A673 (cell line): ENCODE measurements at regions of chr14 and their contacts with region 1.

Region 1: GRCh38 chr14:23327947-23328744 is 6.9 kb downstream of the PABPN1 start:
- DNase-seq: peak; percentile 82
- H3K4me3 ChIP-seq: no peak overlapping the region
- H3K27ac ChIP-seq: no peak overlapping the region
- H3K4me1 ChIP-seq: peaks cover 4% of the 10 kb centered on the region
- H3K27me3 ChIP-seq: no peaks in the 10 kb centered on the region
- CTCF ChIP-seq: peak; percentile 90

Region 2: DNA sequence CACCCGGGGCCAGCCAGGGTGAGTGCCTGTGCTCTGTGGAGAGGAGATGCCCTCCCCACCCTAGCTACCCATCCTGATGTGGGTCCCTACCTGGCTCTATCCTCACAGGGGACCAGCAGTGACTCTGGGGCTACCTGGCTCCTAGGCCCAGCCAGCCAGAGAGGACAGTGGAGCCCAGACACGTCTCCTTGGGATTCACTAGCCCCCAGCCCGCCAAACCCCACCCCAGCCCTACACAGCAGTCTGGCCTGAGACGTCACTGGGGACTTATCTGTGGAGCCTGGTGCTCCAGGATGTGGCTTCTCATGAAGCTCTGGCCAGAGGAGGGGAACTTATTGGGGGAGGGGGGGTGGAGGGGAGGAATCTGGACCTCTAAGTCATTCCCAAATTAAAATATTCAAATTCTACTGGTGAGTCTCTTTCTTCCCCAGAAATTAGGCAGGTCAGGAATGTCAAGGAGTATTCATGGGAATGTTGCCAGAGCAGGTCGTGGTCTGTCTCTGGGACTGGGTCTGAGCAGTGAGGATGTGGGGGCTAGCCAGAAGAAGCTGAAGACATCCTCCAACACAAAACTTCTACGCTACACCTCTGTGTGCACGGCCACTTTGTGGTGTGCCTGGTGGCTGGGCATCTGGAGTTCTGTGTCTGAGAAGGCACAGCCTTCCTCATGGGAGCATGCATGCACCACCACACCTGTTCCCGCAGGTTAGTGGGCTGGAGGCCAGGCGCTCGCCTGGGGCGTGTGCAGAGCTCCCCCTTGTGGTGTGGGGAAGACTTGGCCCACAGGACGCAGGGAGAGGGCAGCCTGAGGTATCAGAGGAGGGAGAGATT is 51.4 kb after region 1 on chr14:
- CTCF ChIA-PET with region 1: no interaction called
- POLR2A ChIA-PET with region 1: no interaction called
- intact Hi-C with region 1: loop called (anchors 1 kb)
- DNase-seq: peak; percentile 50
- H3K4me3 ChIP-seq: no peak overlapping the region
- H3K27ac ChIP-seq: no peak overlapping the region
- H3K4me1 ChIP-seq: peaks cover 8% of the 10 kb centered on the region
- H3K27me3 ChIP-seq: no peaks in the 10 kb centered on the region
- CTCF ChIP-seq: peak; percentile 97

Region 3: GRCh38 chr14:23457587-23458445 is 129.7 kb after region 1 on chr14:
- CTCF ChIA-PET with region 1: no interaction called
- POLR2A ChIA-PET with region 1: no interaction called
- intact Hi-C with region 1: loop called (anchors 5 kb)
- DNase-seq: no peak
- H3K4me3 ChIP-seq: no peak overlapping the region
- H3K27ac ChIP-seq: no peak overlapping the region
- H3K4me1 ChIP-seq: no peaks in the 10 kb centered on the region
- H3K27me3 ChIP-seq: no peaks in the 10 kb centered on the region
- CTCF ChIP-seq: no peak

Region 4: GRCh38 chr14:23562268-23563203 is 234.4 kb after region 1 on chr14:
- CTCF ChIA-PET with region 1: no interaction called
- POLR2A ChIA-PET with region 1: no interaction called
- intact Hi-C with region 1: loop called (anchors 2 kb)
- DNase-seq: peak; percentile 75
- H3K4me3 ChIP-seq: no peak overlapping the region
- H3K27ac ChIP-seq: no peak overlapping the region
- H3K4me1 ChIP-seq: peaks cover 3% of the 10 kb centered on the region
- H3K27me3 ChIP-seq: no peaks in the 10 kb centered on the region
- CTCF ChIP-seq: peak; percentile 87